ENCODE measurements at regions of chr1 and their contacts with region 1.

Region 1: GRCh38 chr1:8560611-8561544 is 243.0 kb downstream of the SLC45A1 start:
- DNase-seq: peak; percentile 78
- H3K4me3 Mint-ChIP-seq: peak overlapping the region; percentile 60
- H3K27ac Mint-ChIP-seq: peak overlapping the region; percentile 87
- H3K4me1 Mint-ChIP-seq: peaks cover 33% of the 10 kb centered on the region
- H3K27me3 Mint-ChIP-seq: no peaks in the 10 kb centered on the region

Region 2: DNA sequence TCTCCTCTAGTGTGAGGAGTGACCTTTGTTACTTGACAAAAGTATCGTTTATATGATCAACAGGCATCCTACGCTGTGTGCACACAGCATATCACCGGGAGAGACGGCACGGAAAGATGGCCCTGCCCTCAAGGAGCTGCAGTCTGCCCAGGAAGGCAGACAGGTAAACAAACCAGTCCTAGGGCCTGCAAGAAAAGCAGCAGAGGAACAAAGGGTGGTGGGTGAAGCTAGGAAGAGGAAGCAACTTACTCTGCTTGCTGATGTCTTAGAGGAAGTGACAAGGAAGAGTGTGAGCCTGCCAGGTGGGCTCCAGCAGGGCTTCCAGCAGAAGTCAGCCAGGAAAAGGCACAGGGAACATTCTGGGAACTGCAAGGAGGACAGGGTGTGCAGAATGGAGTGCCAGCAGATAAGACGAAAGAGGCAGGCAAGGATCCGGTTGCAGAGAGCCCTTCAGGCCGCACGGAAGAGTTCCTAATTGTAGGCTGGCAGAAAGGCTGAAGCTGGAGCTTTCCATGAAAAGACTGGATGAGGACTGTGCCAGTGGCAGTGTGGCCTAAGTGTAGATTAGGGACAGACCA is 136.2 kb before region 1 on chr1:
- intact Hi-C with region 1: no loop called
- DNase-seq: peak; percentile 76
- H3K4me3 Mint-ChIP-seq: peak overlapping the region; percentile 86
- H3K27ac Mint-ChIP-seq: peak overlapping the region; percentile 90
- H3K4me1 Mint-ChIP-seq: peaks cover 46% of the 10 kb centered on the region
- H3K27me3 Mint-ChIP-seq: no peaks in the 10 kb centered on the region

Region 3: DNA sequence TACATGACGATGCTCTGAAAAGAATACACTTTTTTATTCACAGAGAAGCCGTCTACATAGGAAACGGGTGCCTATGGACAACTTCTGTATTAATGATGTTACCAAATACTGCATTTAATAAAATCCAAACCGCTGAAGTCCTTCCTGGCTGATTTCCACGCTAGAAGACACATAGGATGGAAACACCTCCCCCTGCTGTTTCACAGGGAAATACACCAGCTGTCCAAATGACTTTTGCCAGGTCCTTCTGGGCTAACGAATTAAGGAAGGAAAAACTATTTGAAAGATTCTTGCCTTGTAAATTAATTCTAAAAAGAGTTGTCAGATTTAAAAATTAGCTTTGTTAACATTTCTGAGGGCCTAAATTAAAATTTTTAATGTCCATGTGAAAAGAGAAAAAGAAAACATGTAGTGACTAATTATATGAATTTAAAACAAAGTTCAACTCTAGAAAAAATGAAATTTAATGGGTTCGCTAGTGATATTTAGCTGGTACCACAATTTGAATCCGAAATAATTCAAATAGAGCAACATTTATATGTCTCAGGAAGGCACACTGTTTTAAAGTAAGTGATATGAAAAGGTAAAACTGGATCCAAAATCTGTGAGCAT is 110.5 kb after region 1 on chr1:
- intact Hi-C with region 1: loop called (anchors 2 kb)
- DNase-seq: peak; percentile 75
- H3K4me3 Mint-ChIP-seq: no peak overlapping the region
- H3K27ac Mint-ChIP-seq: no peak overlapping the region
- H3K4me1 Mint-ChIP-seq: peaks cover 40% of the 10 kb centered on the region
- H3K27me3 Mint-ChIP-seq: no peaks in the 10 kb centered on the region

Region 4: GRCh38 chr1:8727809-8728213 is 166.9 kb after region 1 on chr1:
- intact Hi-C with region 1: loop called (anchors 1 kb)
- DNase-seq: no peak
- H3K4me3 Mint-ChIP-seq: no peak overlapping the region
- H3K27ac Mint-ChIP-seq: no peak overlapping the region
- H3K4me1 Mint-ChIP-seq: peaks cover 18% of the 10 kb centered on the region
- H3K27me3 Mint-ChIP-seq: no peaks in the 10 kb centered on the region

Region 5: GRCh38 chr1:8848663-8849386 is 287.9 kb after region 1 on chr1:
- intact Hi-C with region 1: loop called (anchors 2 kb)
- DNase-seq: peak; percentile 92
- H3K4me3 Mint-ChIP-seq: no peak overlapping the region
- H3K27ac Mint-ChIP-seq: no peak overlapping the region
- H3K4me1 Mint-ChIP-seq: peaks cover 3% of the 10 kb centered on the region
- H3K27me3 Mint-ChIP-seq: no peaks in the 10 kb centered on the region

Measured in activated CD4-positive, alpha-beta T cell treated with anti-CD3 and anti-CD28 coated beads, Interleukin-2, amount 10 ng/mL, durations not matched to agents 24 days and 14 days (primary cell).